A549 (cell line): ENCODE measurements at regions of chr16 and their contacts with region 1.

Region 1: DNA sequence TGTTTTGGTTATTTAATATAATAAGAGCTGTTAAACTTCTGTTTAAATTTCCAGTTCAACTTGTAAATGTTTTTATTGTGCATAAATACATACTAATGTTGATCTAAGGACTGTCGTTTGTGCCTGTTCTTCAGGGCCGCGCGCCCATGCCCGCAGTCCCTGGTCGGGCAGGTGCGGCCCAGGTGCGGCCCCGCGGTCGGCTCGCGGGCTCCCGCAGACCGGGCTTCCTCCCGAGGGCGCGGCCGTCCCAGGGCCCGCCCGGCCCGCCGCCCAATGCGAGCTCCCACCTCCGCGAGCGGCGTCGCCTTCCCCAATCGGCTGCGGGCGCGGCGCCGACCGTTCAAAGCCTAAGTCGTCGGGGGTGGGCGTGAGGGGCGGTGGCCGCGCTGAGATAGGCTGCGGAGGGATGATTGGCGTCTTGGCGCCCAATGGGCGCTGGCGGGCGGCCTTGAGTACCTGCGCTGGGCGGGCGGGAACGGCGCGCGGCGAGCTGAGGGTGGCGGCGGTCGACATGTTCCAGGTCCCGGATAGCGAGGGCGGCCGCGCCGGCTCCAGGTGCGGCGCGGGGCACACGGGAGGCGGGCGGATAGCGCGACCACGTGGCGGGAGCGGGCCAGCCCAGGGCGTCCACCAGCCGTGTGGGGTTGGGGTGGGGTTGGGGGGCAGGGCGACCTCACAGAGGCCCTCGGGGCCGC is at the start of gene JPT2:
- DNase-seq: peak; percentile 95 to 99
- ATAC-seq: peak; percentile 95 to 96
- H3K4me3 ChIP-seq: peak within 1 kb of the TSS; percentile 85
- H3K27ac ChIP-seq: peak within 1 kb of the TSS; percentile 97 to 98
- H3K4me1 ChIP-seq: peaks cover 37% of the 10 kb centered on the region
- CTCF ChIP-seq: no peak
- EP300 ChIP-seq: no peak
- POLR2A ChIP-seq: peak; percentile 43
- RAD21 ChIP-seq: peak in 1 of 2 experiments; percentile 14; a peak in 1 of 5 replicates
- polyA plus RNA-seq, gene JPT2: 91.6 and 97.6 TPM in 2 replicates

Region 2: GRCh38 chr16:1610276-1611017 is 67.5 kb before region 1 on chr16:
- CTCF ChIA-PET with region 1: no interaction called
- POLR2A ChIA-PET with region 1: interaction called, 10 read pairs
- DNase-seq: peak; percentile 81 to 92
- ATAC-seq: peak; percentile 68 to 86
- H3K4me3 ChIP-seq: peak overlapping the region; percentile 63
- H3K27ac ChIP-seq: peak overlapping the region; percentile 77 to 92
- H3K4me1 ChIP-seq: peaks cover 14% of the 10 kb centered on the region; the same call in 2 of the 3 replicates
- CTCF ChIP-seq: 0 out of 3 replicates have a peak, but pooled peaks have one; percentile 8
- EP300 ChIP-seq: no peak
- POLR2A ChIP-seq: peak; percentile 29
- RAD21 ChIP-seq: 0 out of 5 replicates have a peak, but pooled peaks of 1 of the 2 experiments have one; percentile 18

Region 3: DNA sequence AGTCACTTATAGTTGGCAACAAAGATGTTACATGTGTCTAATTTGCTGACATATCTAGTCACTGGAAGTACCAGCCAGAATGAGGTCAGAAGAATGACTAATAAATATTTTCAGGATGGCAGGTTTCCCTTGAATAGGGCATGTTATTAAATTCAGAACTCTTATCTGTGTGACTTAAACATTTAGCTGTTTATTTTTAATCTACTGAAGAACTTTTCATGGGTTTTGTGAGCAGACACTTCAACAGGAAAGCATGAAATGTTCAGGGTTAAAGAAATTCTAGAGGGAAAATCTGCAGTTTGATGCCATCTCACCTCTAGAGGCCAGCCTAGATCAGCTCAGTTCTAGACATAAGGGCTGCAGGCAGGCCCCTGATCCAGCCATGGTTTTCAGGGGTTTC is 13.3 kb after region 1 on chr16:
- CTCF ChIA-PET with region 1: interaction called, 37 read pairs
- POLR2A ChIA-PET with region 1: interaction called, 15 read pairs
- DNase-seq: peak in 1 of 2 experiments; percentile 52
- ATAC-seq: peak; percentile 61 to 65
- H3K4me3 ChIP-seq: peak overlapping the region; percentile 30; the same call in 2 of the 3 replicates
- H3K27ac ChIP-seq: peak overlapping the region; percentile 85 to 95
- H3K4me1 ChIP-seq: peaks cover 68% of the 10 kb centered on the region
- CTCF ChIP-seq: peak; percentile 38; the same call in 2 of the 3 replicates
- EP300 ChIP-seq: no peak
- POLR2A ChIP-seq: no peak
- RAD21 ChIP-seq: peak; percentile 38 to 45; a peak in 4 of 5 replicates